Endothelial cell of umbilical vein (primary cell): ENCODE measurements at regions of chr10 and their contacts with region 1.

Region 1: DNA sequence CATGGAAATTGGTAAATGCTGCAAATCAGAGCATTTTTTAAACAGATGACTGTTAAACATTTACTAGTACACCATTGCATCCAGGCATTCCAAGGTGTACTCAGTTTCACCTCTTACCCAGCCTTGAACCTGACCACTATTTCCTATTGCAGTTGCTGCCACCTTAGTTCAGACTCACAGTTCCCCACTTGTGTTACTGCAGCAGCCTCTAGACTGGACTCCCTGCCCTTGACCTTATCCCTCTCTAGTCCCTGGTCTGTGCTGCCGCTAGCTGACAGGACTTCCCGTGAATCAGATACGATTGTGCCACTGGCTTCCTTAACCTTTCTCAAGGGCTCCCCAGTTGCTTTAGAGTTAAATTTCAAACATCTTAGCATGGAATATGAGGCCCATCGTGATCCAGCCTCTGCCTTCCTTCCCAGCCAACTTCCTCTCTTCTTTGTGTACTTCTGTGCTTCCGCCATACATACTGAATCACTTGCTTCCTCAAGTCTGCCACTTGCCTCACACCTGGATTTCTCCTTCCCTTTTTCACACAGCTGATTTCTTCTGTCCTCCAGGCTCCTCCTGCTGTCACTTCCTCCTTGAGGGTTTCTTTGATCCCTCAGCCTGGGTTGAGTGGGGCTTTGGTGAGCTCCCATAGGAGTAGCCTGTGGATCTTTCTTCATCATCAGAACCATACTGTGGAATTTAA is 118.7 kb upstream of the GJD4 start:
- DNase-seq: peak; percentile 19
- H3K4me3 ChIP-seq: no peak overlapping the region
- H3K27ac ChIP-seq: no peak overlapping the region
- H3K4me1 ChIP-seq: peaks cover 10% of the 10 kb centered on the region
- H3K27me3 ChIP-seq: no peaks in the 10 kb centered on the region
- CTCF ChIP-seq: no peak
- POLR2A ChIP-seq: no peak

Region 2: DNA sequence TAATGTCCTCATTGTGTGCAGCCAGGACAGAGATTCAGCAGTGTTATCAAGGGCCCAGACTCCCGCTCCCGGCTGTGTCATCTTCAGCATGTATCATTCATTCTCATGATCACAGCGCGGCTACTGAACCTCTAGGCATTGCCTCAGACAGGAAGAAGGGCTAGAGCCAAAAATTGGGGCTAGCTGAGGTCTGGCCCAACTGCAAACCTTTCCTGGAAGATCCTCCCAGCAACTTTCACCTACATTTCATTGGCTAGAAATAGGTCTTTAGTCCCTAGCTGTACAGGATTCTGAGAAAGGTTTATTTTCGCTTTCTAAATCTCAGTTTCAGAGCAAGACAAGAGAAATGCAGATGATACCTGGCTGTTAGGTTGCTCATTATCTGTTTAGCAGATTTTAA is 277.9 kb before region 1 on chr10:
- CTCF ChIA-PET with region 1: no interaction called
- POLR2A ChIA-PET with region 1: no interaction called
- dilution Hi-C with region 1: no loop called
- intact Hi-C with region 1: no loop called
- DNase-seq: no peak
- H3K4me3 ChIP-seq: no peak overlapping the region
- H3K27ac ChIP-seq: no peak overlapping the region
- H3K4me1 ChIP-seq: no peaks in the 10 kb centered on the region
- H3K27me3 ChIP-seq: no peaks in the 10 kb centered on the region
- CTCF ChIP-seq: no peak
- POLR2A ChIP-seq: no peak

Region 3: DNA sequence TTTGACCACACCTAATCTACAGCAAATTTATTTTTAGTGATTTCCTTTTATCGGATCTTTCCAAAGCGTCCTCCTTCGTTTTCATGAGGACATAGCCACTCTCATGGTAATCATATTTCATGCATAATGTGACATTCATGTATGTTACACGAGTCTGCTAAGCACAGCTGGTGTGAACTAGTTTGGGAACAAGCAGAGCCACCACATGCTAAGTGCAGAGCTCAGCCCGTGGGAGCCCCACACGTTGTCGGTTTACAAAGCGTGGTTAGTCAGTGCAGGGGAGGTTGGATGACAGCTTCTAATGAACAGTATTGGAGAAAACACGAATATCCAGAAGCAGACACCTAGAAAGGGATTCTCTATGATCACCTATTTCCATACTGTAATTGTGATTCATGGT is 40.3 kb after region 1 on chr10:
- CTCF ChIA-PET with region 1: no interaction called
- POLR2A ChIA-PET with region 1: no interaction called
- dilution Hi-C with region 1: no loop called
- intact Hi-C with region 1: loop called (anchors 1 kb)
- DNase-seq: no peak
- H3K4me3 ChIP-seq: no peak overlapping the region
- H3K27ac ChIP-seq: no peak overlapping the region
- H3K4me1 ChIP-seq: no peaks in the 10 kb centered on the region
- H3K27me3 ChIP-seq: no peaks in the 10 kb centered on the region
- CTCF ChIP-seq: no peak
- POLR2A ChIP-seq: no peak

Region 4: GRCh38 chr10:36211856-36212255 is 725.4 kb after region 1 on chr10:
- CTCF ChIA-PET with region 1: no interaction called
- POLR2A ChIA-PET with region 1: no interaction called
- dilution Hi-C with region 1: no loop called
- intact Hi-C with region 1: no loop called
- DNase-seq: no peak
- H3K4me3 ChIP-seq: no peak overlapping the region
- H3K27ac ChIP-seq: no peak overlapping the region
- H3K4me1 ChIP-seq: no peaks in the 10 kb centered on the region
- H3K27me3 ChIP-seq: no peaks in the 10 kb centered on the region
- CTCF ChIP-seq: no peak
- POLR2A ChIP-seq: no peak